ENCODE measurements at regions of chr1 and their contacts with region 1.

Region 1: DNA sequence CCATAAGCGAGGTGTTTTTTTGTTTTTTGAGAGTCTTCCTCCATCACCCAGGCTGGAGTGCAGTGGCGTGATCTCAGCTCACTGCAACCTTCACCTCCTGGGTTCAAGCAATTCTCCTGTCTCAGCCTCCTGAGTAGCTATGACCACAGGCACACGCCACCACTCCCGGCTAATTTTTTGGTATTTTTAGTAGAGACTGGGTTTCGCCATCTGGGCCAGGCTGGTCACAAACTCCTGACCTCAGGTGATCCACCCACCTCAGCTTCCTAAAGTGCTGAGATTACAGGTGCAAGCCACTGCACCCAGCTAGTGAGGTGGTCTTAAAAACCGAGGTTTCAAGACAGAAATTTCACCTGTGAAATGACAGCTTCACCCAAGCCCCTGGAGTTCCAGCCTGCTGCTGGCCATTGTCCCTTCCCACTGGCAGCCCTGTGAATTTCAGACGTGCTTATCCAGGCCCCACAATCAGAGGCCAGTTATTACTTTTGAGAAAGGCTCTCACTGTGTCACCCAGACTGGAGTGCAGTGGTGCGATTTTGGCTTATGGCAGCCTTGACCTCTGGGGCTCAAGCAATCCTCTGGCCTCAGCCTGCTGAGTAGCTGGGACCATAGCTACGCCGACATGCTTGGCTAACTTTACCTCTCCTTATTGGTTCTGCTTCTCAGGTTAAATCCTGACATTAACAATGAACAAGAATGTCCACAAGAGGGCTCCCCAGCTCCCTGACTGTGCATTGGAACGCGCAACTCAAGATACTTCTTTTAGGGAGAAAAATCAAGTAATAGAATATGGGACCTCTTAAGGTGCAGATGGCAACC is 19.4 kb downstream of the ENO1 start:
- DNase-seq: peak; percentile 55

Region 2: GRCh38 chr1:8516793-8517556 is 342.1 kb before region 1 on chr1:
- CTCF ChIA-PET with region 1: no interaction called
- POLR2A ChIA-PET with region 1: no interaction called
- DNase-seq: no peak

Region 3: GRCh38 chr1:8878448-8879347 is 19.6 kb after region 1 on chr1 and contains the start of gene ENO1:
- CTCF ChIA-PET with region 1: interaction called, 4 read pairs
- POLR2A ChIA-PET with region 1: interaction called, 36 read pairs
- DNase-seq: peak; percentile 94

Measured in HEK293T (cell line).